IMR-90 (cell line): ENCODE measurements at regions of chr21 and their contacts with region 1.

Region 1: GRCh38 chr21:32826329-32827167 is 55.0 kb upstream of the PAXBP1 start:
- DNase-seq: peak; percentile 63
- ATAC-seq: peak; percentile 97
- H3K4me3 ChIP-seq: no peak overlapping the region
- H3K27ac ChIP-seq: no peak overlapping the region
- H3K4me1 ChIP-seq: no peaks in the 10 kb centered on the region
- H3K27me3 ChIP-seq: peaks cover 6% of the 10 kb centered on the region
- CTCF ChIP-seq: peak; percentile 54
- POLR2A ChIP-seq: no peak
- RAD21 ChIP-seq: peak; percentile 65

Region 2: DNA sequence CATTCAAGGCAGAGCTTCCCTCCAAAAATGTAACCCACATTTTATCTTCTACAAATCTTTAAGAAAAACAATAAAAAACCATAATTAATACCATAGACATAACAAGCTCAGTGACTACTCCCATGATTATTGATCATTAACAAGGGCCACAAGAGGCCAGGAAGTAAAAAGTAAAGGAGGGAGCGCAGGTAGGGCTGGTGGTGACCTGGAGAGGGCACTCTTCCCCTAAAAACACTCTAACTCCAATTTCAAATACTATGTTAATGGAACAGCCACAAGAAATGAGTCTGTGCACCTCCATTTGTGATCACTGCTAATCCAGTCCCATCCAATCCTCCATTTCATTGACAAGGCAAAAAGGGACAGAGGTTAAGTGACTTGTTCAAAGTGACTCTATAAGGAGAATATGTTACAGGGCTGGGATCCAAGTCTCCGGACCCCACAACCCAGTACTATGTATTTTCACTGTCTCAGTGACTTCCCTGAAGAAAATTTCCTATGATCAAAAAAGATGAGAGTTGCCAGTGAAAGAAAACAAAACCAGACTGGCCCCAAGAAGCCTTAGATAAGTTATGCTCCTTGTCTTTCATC is 173.1 kb before region 1 on chr21:
- CTCF ChIA-PET with region 1: no interaction called
- POLR2A ChIA-PET with region 1: no interaction called
- dilution Hi-C with region 1: no loop called
- in situ Hi-C with region 1: loop called (anchors 10 kb)
- intact Hi-C with region 1: loop called (anchors 1 kb)
- DNase-seq: peak; percentile 10
- ATAC-seq: peak; percentile 35; the same call in 1 of the 2 replicates
- H3K4me3 ChIP-seq: no peak overlapping the region
- H3K27ac ChIP-seq: no peak overlapping the region
- H3K4me1 ChIP-seq: no peaks in the 10 kb centered on the region
- H3K27me3 ChIP-seq: no peaks in the 10 kb centered on the region
- CTCF ChIP-seq: peak; percentile 53
- POLR2A ChIP-seq: no peak
- RAD21 ChIP-seq: peak; percentile 60

Region 3: DNA sequence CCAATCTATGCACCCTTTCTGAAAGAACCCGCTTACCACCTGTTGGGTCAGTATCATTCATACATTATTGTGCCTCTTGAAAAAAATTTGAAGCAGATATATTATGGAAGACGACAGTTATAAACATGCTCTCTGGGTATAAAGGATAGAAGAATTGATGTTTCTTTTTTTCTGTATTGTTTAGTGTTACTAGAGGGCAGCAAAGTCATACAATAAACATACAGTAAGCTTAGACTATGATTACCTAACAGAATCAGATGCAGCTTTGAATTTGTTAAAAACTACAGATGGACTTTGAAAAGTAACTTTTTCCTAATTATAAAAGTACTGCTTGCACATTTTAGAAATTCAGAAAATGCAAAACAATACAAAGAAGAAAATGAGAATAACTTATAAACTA is 43.9 kb before region 1 on chr21:
- CTCF ChIA-PET with region 1: interaction called, 10 read pairs
- POLR2A ChIA-PET with region 1: no interaction called
- dilution Hi-C with region 1: no loop called
- in situ Hi-C with region 1: no loop called
- intact Hi-C with region 1: loop called (anchors 1 kb)
- DNase-seq: no peak
- ATAC-seq: peak; percentile 57; the same call in 1 of the 2 replicates
- H3K4me3 ChIP-seq: no peak overlapping the region
- H3K27ac ChIP-seq: no peak overlapping the region
- H3K4me1 ChIP-seq: no peaks in the 10 kb centered on the region
- H3K27me3 ChIP-seq: no peaks in the 10 kb centered on the region
- CTCF ChIP-seq: no peak
- POLR2A ChIP-seq: no peak
- RAD21 ChIP-seq: no peak

Region 4: DNA sequence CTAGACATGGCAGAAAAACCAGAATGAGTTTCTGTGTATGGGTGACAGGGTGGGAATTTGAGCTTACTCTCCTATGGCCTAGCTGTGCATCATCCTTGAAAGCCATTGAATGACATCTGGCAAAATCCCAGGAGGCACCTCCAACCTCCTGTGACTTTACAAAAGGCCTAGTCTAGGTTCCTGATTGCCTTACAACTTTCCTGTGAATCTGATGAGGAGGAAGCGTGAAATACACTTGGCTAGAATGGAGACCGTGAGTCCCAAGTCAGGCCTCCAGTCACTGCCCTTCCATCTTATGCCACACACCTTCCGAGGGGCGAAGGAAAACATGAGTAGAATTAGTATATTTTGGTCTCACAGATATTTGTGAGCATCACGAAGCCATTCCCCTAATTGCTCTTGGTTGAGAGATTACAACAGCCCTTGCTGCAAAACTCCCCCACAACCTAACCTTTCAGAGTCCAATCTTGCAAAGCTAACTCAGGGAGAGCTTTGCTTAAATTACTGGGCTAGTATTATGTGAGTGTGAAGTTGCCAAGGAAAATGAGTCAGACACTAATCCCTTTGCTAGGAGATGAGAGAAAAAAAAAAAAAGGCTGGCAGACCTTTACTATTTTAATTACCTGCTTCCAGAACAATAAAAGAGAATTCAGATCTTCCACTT is 18.7 kb before region 1 on chr21:
- CTCF ChIA-PET with region 1: no interaction called
- POLR2A ChIA-PET with region 1: no interaction called
- dilution Hi-C with region 1: no loop called
- in situ Hi-C with region 1: no loop called
- intact Hi-C with region 1: no loop called
- DNase-seq: peak; percentile 38
- ATAC-seq: peak; percentile 42; the same call in 1 of the 2 replicates
- H3K4me3 ChIP-seq: no peak overlapping the region
- H3K27ac ChIP-seq: no peak overlapping the region
- H3K4me1 ChIP-seq: peaks cover 7% of the 10 kb centered on the region; the same call in 1 of the 2 replicates
- H3K27me3 ChIP-seq: no peaks in the 10 kb centered on the region
- CTCF ChIP-seq: no peak
- POLR2A ChIP-seq: no peak
- RAD21 ChIP-seq: no peak

Region 5: GRCh38 chr21:33434770-33435360 is 608.3 kb after region 1 on chr21:
- CTCF ChIA-PET with region 1: no interaction called
- POLR2A ChIA-PET with region 1: no interaction called
- dilution Hi-C with region 1: no loop called
- in situ Hi-C with region 1: loop called (anchors 25 kb)
- intact Hi-C with region 1: no loop called
- DNase-seq: peak; percentile 96
- ATAC-seq: peak; percentile 95
- H3K4me3 ChIP-seq: no peak overlapping the region
- H3K27ac ChIP-seq: peak overlapping the region; percentile 74; the same call in 1 of the 2 replicates
- H3K4me1 ChIP-seq: peaks cover 10% of the 10 kb centered on the region
- H3K27me3 ChIP-seq: no peaks in the 10 kb centered on the region
- CTCF ChIP-seq: no peak
- POLR2A ChIP-seq: peak; percentile 43; the same call in 1 of the 2 replicates
- RAD21 ChIP-seq: no peak